ENCODE measurements at regions of chr19 and their contacts with region 1.

Region 1: DNA sequence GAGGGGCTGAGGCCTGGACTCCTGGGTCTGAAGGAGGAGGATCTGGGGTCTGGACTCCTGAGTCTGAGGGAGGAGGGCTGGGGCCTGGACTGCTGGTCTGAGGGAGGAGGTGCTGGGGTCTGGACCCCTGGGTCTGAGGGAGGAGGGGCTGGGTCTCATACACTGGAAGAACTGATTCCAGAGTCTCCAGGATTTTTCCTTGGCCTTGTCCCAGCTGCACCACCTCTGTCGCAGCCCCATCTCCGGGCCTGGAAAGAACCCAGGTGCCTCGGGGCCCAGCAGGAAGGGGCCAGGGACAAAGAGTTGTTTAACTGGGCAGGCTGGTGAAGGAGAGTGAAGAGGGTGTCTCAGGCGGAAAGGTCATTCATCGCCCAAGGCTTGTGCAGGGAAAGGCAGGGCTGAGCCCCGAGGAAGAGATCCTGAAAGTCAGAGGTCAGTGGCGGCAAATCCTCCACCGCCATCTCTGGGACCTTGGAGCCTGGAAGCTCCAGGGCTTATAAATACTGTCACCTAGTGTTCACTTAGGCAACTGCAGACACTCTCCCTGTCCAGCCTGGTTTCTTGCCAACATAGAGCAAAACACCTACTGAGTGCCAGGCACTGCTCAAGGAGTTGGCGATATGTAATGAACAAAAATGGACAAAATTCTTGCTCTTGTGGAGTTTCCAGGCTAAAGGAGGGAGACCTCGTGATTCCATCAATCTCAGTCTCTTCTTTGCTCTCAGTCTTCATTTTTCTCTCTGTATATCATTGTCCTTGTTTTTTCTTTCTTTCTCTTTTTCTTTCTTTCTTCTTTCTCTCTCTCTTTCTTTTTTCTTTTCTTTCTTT is 4.4 kb upstream of the KCNN4 start:
- DNase-seq: peak in 8 of 9 donors; percentile 29 to 68 (median 56)
- ATAC-seq: peak; percentile 75
- H3K4me3 ChIP-seq: peak overlapping the region; percentile 12
- H3K4me3 Mint-ChIP-seq: peak overlapping the region; percentile 43 to 85 (median 70)
- H3K27ac ChIP-seq: peak overlapping the region; percentile 72
- H3K27ac Mint-ChIP-seq: peak overlapping the region; percentile 87 to 98 (median 95)
- H3K4me1 ChIP-seq: peaks cover 21 to 30% of the 10 kb centered on the region in 2 donors
- H3K4me1 Mint-ChIP-seq: peaks cover 27 to 49% (median 40%) of the 10 kb centered on the region in 7 donors
- H3K27me3 ChIP-seq: no peaks in the 10 kb centered on the region
- H3K27me3 Mint-ChIP-seq: peaks cover 0 to 6% (median 6%) of the 10 kb centered on the region in 5 donors

Region 2: DNA sequence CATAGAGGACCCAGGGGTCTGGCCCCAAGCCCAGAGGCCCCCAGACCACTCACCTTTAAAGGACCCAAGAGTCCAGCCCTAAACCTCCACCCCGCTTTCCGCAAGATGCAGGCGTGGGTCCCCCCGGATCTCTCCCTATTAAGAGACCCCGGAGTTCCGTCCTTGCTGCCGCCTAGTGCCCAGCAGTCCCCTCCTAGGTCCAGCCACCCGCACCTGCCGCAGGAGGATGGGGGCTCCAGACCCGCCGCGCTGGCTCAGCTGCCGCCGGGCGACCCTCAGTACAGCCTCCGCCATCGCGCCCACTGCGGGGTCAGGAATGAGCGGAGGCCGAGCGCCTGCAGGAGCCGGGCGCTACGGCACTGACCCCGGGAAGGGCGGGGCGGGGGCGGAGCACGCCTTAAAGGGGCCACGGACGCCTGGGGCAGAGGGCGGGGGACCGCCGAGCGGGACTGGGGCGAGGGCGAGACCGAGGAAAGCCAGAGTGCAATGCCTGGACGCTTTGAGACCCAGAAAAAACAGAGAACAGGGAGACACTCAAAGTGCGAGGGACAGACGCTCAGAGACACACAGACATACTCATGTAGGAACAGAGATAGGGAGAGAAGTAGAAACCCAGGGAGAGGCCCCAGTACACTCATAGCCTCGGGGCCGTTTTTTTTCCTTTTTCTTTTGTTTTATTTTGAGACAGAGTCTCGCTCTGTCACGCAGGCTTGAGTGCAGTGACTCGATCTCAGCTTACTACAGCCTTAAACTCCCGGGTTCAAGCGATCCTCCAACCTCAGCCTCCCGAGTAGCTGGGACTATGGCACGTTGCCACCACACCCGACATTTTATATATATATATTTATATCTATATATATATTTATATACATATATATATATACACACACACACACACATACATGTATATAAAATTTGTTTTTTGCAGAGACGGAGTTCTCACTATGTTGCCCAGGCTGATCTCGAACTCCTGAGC is 258.0 kb before region 1 on chr19 and contains the start of gene ETHE1:
- CTCF ChIA-PET with region 1: interaction called, 3 read pairs
- POLR2A ChIA-PET with region 1: no interaction called
- intact Hi-C with region 1: loop called in 1 of 2 experiments (anchors 10 kb)
- DNase-seq: peak; percentile 39 to 86 (median 50)
- ATAC-seq: peak; percentile 86
- H3K4me3 ChIP-seq: peak within 1 kb of the TSS; percentile 75
- H3K4me3 Mint-ChIP-seq: peak within 1 kb of the TSS; percentile 78 to 94 (median 84)
- H3K27ac ChIP-seq: peak within 1 kb of the TSS; percentile 81
- H3K27ac Mint-ChIP-seq: peak within 1 kb of the TSS; percentile 75 to 96 (median 86)
- H3K4me1 ChIP-seq: peaks cover 15 to 24% of the 10 kb centered on the region in 2 donors
- H3K4me1 Mint-ChIP-seq: peaks cover 18 to 38% (median 25%) of the 10 kb centered on the region in 7 donors
- H3K27me3 ChIP-seq: no peaks in the 10 kb centered on the region
- H3K27me3 Mint-ChIP-seq: no peaks in the 10 kb centered on the region
- total RNA-seq, gene ETHE1: 20.3 to 58.6 (median 23.9) TPM

Region 3: GRCh38 chr19:43723588-43723987 is 61.6 kb before region 1 on chr19:
- CTCF ChIA-PET with region 1: no interaction called
- POLR2A ChIA-PET with region 1: no interaction called
- intact Hi-C with region 1: no loop called
- DNase-seq: no peak
- ATAC-seq: no peak
- H3K4me3 ChIP-seq: no peak overlapping the region
- H3K4me3 Mint-ChIP-seq: no peak overlapping the region
- H3K27ac ChIP-seq: no peak overlapping the region
- H3K27ac Mint-ChIP-seq: no peak overlapping the region
- H3K4me1 ChIP-seq: no peaks in the 10 kb centered on the region
- H3K4me1 Mint-ChIP-seq: peaks cover 0 to 12% (median 6%) of the 10 kb centered on the region in 7 donors
- H3K27me3 ChIP-seq: no peaks in the 10 kb centered on the region
- H3K27me3 Mint-ChIP-seq: no peaks in the 10 kb centered on the region

Region 4: GRCh38 chr19:43743022-43743421 is 42.2 kb before region 1 on chr19:
- CTCF ChIA-PET with region 1: interaction called, 34 read pairs
- POLR2A ChIA-PET with region 1: interaction called, 12 read pairs
- intact Hi-C with region 1: loop called (anchors 1 kb)
- DNase-seq: no peak
- ATAC-seq: no peak
- H3K4me3 ChIP-seq: no peak overlapping the region
- H3K4me3 Mint-ChIP-seq: peak overlapping the region in 1 of 10 donors; percentile 19
- H3K27ac ChIP-seq: no peak overlapping the region
- H3K27ac Mint-ChIP-seq: no peak overlapping the region
- H3K4me1 ChIP-seq: no peaks in the 10 kb centered on the region
- H3K4me1 Mint-ChIP-seq: peaks cover 6 to 32% (median 13%) of the 10 kb centered on the region in 7 donors
- H3K27me3 ChIP-seq: no peaks in the 10 kb centered on the region
- H3K27me3 Mint-ChIP-seq: no peaks in the 10 kb centered on the region

Region 5: GRCh38 chr19:43765109-43765876 is 19.9 kb before region 1 on chr19:
- CTCF ChIA-PET with region 1: interaction called, 11 read pairs
- POLR2A ChIA-PET with region 1: interaction called, 100 read pairs
- intact Hi-C with region 1: loop called in 1 of 2 experiments (anchors 1 kb)
- DNase-seq: peak in 8 of 9 donors; percentile 20 to 86 (median 38)
- ATAC-seq: peak; percentile 81
- H3K4me3 ChIP-seq: no peak overlapping the region
- H3K4me3 Mint-ChIP-seq: peak overlapping the region; percentile 35 to 80 (median 67)
- H3K27ac ChIP-seq: peak overlapping the region; percentile 45
- H3K27ac Mint-ChIP-seq: peak overlapping the region; percentile 78 to 94 (median 88)
- H3K4me1 ChIP-seq: peaks cover 23 to 32% of the 10 kb centered on the region in 2 donors
- H3K4me1 Mint-ChIP-seq: peaks cover 32 to 73% (median 40%) of the 10 kb centered on the region in 7 donors
- H3K27me3 ChIP-seq: no peaks in the 10 kb centered on the region
- H3K27me3 Mint-ChIP-seq: no peaks in the 10 kb centered on the region

Region 6: DNA sequence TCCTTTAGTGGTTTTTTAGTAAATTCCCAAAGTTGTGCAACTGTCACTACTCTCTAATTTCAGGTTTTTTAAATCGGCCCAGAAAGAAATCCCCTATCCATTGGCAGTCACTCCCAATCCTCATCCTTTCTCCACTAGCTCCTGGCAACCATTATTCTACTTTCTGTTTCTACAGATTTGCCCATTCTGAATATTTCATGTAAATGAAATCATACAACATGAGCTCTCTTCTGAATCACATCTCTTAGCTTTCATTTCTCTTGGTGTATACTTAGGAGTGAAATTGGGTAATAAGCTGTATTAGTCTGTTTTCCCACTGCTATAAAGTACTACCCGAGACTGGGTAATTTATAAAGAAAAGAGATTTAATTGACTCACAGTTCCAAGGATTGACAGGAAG is 257.0 kb after region 1 on chr19:
- CTCF ChIA-PET with region 1: no interaction called
- POLR2A ChIA-PET with region 1: no interaction called
- intact Hi-C with region 1: no loop called
- DNase-seq: no peak
- ATAC-seq: no peak
- H3K4me3 ChIP-seq: no peak overlapping the region
- H3K4me3 Mint-ChIP-seq: no peak overlapping the region
- H3K27ac ChIP-seq: no peak overlapping the region
- H3K27ac Mint-ChIP-seq: no peak overlapping the region
- H3K4me1 ChIP-seq: no peaks in the 10 kb centered on the region
- H3K4me1 Mint-ChIP-seq: no peaks in the 10 kb centered on the region
- H3K27me3 ChIP-seq: peaks cover 0 to 2% of the 10 kb centered on the region in 2 donors
- H3K27me3 Mint-ChIP-seq: peaks cover 0 to 63% (median 24%) of the 10 kb centered on the region in 5 donors

Region 7: GRCh38 chr19:44752816-44753618 is 967.8 kb after region 1 on chr19:
- CTCF ChIA-PET with region 1: no interaction called
- POLR2A ChIA-PET with region 1: no interaction called
- intact Hi-C with region 1: loop called in 1 of 2 experiments (anchors 5 kb)
- DNase-seq: peak; percentile 80 to 96 (median 95)
- ATAC-seq: peak; percentile 85
- H3K4me3 ChIP-seq: peak overlapping the region; percentile 40
- H3K4me3 Mint-ChIP-seq: peak overlapping the region; percentile 91 to 96 (median 94)
- H3K27ac ChIP-seq: peak overlapping the region; percentile 97
- H3K27ac Mint-ChIP-seq: peak overlapping the region; percentile 93 to 99 (median 97)
- H3K4me1 ChIP-seq: peaks cover 46 to 60% of the 10 kb centered on the region in 2 donors
- H3K4me1 Mint-ChIP-seq: peaks cover 36 to 71% (median 63%) of the 10 kb centered on the region in 7 donors
- H3K27me3 ChIP-seq: no peaks in the 10 kb centered on the region
- H3K27me3 Mint-ChIP-seq: peaks cover 0 to 3% (median 0%) of the 10 kb centered on the region in 5 donors